Activated T-helper 1 cell treated with anti-CD3 and anti-CD28 coated beads, Interleukin-12 subunit alpha, Interleukin-12 subunit beta, Interleukin-2, Interleukin-4 antibody, amounts not matched to agents 30 ng/mL and 10 ng/mL and 1 ng/mL, durations not matched to agents 14 hours and 24 hours and 36 hours (primary cell): ENCODE measurements at regions of chr11 and their contacts with region 1.

Region 1: DNA sequence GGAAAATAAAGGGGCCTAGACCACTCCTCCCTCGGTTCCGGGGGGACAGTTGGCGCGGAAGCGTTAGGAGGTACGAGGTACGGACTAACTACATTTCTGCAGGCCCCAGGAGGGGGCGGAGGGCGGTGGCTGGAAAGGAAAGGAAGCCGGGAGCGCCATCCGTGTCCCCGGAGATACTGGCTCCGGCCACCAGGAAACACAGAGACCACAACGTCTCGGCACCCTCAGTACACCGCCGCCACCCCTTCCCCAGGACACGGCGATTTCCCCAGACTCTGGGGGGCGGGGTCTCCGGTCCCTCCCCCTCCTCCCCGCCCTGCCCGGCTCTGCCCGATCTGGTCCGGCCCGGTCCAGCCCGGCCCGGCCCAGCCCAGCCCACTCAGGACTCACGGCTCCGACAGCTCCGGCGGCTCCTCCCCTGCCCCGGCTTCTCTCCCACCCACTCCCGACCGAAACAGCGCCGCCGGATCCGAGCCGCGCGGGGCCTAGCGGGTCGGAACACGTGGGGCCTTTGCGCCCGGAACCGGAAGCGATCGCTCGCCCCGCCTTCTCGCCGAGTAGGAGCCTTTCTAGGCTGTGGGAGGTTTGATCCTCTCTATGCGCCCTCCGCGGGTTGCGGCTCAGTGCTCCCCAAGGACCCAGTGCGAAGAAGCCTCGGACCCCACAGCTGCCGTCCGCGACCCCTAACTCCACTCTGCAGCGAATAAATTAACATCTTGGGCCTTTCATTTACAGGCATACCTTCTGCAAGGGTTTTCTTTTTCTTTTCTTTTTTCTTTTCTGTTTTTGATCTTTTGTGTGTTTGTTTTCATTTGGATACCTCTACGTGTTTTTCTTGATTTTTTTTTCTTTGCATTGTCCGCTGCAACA is at the start of gene ZNF202:
- DNase-seq: peak; percentile 87
- H3K4me3 Mint-ChIP-seq: peak within 1 kb of the TSS; percentile 96
- H3K27ac Mint-ChIP-seq: peak within 1 kb of the TSS; percentile 93
- H3K4me1 Mint-ChIP-seq: peaks cover 37% of the 10 kb centered on the region
- H3K27me3 Mint-ChIP-seq: peaks cover 7% of the 10 kb centered on the region
- total RNA-seq, gene ZNF202: 26.6 and 27.5 TPM in 2 replicates

Region 2: DNA sequence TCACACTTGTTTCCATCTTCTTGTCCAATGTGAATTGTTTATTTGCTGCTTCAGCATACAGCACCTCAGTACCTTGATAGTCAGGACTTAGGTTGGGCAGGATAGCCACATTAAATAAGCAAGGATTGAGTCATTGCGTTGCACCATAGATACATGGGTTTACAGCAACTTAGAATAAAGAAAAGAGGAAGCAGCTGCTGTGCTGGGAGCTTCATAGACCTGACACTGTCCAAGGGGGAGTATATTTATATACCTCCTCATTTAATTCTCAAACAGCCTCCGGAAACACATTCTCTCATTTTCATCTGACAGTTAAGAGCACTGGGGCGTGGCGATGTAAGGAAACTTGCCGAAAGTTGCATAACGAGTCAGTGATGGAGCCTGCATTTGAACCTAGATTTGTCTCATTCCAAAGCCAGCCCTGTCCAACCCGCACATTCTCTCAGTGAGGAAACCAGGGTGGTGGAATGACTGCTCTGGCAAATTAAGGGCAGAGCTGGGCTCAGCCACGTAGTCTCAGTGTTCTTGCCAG is 1043.7 kb before region 1 on chr11:
- intact Hi-C with region 1: loop called (anchors 2 kb)
- DNase-seq: peak; percentile 16
- H3K4me3 Mint-ChIP-seq: peak overlapping the region; percentile 70
- H3K27ac Mint-ChIP-seq: peak overlapping the region; percentile 78
- H3K4me1 Mint-ChIP-seq: peaks cover 45% of the 10 kb centered on the region
- H3K27me3 Mint-ChIP-seq: peaks cover 4% of the 10 kb centered on the region

Region 3: DNA sequence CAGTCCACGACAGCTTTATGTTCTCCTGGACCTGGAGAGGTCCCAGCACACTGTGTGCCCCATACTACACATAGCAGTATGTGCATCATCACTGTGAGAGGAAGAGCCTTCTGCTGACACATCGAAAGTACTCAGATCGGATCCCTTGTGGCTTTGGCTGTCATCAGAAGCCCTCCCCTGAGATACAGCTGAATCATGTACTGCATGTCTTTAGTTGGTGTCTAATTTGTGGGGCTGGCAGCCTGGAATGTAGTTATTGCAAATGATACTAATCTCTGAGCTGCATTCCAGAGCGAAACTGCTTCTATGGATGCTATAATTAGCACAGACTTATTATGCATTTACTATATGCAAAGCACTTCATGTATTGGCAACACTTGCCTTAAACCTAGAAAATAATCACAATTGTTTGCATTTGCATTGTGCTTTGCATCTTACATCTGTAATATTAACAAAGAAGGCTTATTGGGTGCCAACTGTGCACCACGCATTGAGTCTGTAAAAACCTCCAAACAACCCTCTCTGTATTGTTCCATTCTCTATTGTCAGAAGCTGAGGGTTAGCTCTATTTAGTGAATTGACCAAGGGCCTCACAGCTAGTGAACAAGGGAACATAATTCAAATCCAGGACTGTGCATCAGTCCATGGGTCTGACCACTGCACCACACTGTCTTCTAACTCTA is 992.2 kb before region 1 on chr11:
- intact Hi-C with region 1: loop called (anchors 5 kb)
- DNase-seq: peak; percentile 50
- H3K4me3 Mint-ChIP-seq: no peak overlapping the region
- H3K27ac Mint-ChIP-seq: peak overlapping the region; percentile 5
- H3K4me1 Mint-ChIP-seq: peaks cover 20% of the 10 kb centered on the region
- H3K27me3 Mint-ChIP-seq: peaks cover 10% of the 10 kb centered on the region

Region 4: DNA sequence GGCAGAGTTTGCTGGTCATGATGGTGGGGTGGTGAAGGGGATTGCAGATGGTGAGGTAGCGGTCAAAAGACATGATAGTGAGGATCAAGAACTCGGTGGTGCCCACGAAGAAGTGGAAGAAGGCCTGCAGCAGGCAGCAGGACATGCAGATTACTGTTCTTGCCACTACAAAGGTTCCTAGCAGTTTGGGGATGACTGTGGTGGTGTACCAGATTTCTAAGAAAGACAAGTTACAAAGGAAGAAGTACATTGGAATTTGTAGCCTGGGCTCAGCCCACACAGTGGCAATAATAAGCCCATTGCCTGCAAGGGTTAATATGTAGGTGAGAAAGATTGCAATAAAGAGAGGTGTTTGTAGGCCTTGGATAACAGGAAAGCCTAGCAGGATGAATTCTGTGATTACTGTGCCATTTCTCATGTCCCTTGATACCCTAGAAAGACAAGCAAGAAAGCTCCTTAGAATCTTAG is 12.7 kb after region 1 on chr11 and contains the start of gene OR6X1:
- intact Hi-C with region 1: loop called (anchors 1 kb)
- DNase-seq: peak; percentile 1
- H3K4me3 Mint-ChIP-seq: peak within 1 kb of the TSS; percentile 38
- H3K27ac Mint-ChIP-seq: peak within 1 kb of the TSS; percentile 91
- H3K4me1 Mint-ChIP-seq: peaks cover 68% of the 10 kb centered on the region
- H3K27me3 Mint-ChIP-seq: peaks cover 5% of the 10 kb centered on the region
- total RNA-seq, gene OR6X1: not detected in 2 replicates

Region 5: DNA sequence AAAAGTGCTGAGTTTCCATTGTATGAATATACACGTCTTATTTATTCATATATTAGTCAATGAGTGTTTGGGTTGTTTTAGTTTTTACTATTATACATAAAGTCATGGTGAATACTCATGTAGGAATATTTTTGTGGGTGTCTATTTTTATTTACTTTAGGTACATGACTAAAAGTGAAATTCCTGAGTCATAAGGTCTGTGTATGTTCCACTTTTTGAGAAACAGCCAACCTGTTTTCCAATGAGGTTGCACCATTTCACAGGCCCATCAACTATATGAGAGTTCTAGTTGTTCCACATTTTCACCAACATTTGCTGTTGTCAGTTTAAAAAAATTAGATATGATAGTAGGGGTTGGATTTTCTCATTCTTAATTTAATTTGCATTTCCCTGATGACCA is 19.5 kb after region 1 on chr11:
- intact Hi-C with region 1: loop called (anchors 1 kb)
- DNase-seq: no peak
- H3K4me3 Mint-ChIP-seq: peak overlapping the region; percentile 6
- H3K27ac Mint-ChIP-seq: peak overlapping the region; percentile 79
- H3K4me1 Mint-ChIP-seq: peaks cover 36% of the 10 kb centered on the region
- H3K27me3 Mint-ChIP-seq: peaks cover 14% of the 10 kb centered on the region

Region 6: GRCh38 chr11:124070915-124071635 is 329.7 kb after region 1 on chr11:
- intact Hi-C with region 1: loop called (anchors 5 kb)
- DNase-seq: peak; percentile 41
- H3K4me3 Mint-ChIP-seq: peak overlapping the region; percentile 6
- H3K27ac Mint-ChIP-seq: peak overlapping the region; percentile 63
- H3K4me1 Mint-ChIP-seq: peaks cover 24% of the 10 kb centered on the region
- H3K27me3 Mint-ChIP-seq: peaks cover 14% of the 10 kb centered on the region

Region 7: DNA sequence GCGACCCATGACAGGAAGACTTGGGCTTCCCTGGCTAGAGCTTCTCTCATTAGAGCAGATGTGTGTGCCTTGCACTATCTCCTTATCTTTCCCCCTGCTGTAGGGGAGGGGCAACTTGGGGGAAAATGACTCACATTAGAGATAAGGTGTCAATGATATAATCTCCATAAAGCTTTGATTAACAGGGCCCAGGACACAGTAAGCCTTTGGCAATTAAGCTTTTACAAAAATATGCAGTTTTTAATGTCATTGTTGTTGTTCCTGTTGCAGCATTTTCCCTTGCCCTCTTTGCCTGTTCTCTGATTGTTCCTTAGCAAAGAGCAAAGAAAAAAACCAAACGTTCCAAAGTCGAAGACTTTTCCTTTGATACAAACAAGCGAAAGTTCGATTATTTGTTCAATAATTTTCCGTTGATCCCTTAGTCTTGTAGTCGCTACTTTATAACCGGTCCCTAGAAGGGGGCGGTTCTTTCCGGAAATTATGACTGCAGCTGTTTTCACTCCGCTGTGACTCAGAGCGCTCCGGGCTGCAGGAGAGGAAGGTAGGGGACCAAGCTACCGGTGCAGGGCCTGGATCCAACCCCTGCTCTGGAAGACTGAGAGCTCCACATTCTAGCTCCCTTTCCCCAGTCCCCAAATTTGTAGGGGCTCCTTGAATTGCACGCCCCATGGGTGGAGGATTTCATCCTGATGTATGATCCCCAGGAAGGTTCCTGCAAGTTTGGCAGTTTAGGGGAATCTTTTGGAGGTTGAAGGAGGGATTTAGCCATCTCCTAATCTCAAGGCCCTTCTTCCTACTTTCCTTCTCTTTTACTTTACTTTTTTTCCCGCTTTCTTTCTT is 373.8 kb after region 1 on chr11 and contains the start of gene VWA5A:
- intact Hi-C with region 1: loop called (anchors 2 kb)
- DNase-seq: peak; percentile 71
- H3K4me3 Mint-ChIP-seq: peak within 1 kb of the TSS; percentile 94
- H3K27ac Mint-ChIP-seq: peak within 1 kb of the TSS; percentile 92
- H3K4me1 Mint-ChIP-seq: peaks cover 34% of the 10 kb centered on the region
- H3K27me3 Mint-ChIP-seq: peaks cover 7% of the 10 kb centered on the region
- total RNA-seq, gene VWA5A: 7.9 and 8.0 TPM in 2 replicates